ENCODE measurements at regions of chr7 and their contacts with region 1.

Region 1: GRCh38 chr7:73683056-73683964 is at the starts of genes BUD23 and DNAJC30:
- DNase-seq: peak; percentile 99
- H3K4me3 Mint-ChIP-seq: peak within 1 kb of the TSS; percentile 98
- H3K27ac Mint-ChIP-seq: peak within 1 kb of the TSS; percentile 91
- H3K4me1 Mint-ChIP-seq: peaks cover 47% of the 10 kb centered on the region
- H3K27me3 Mint-ChIP-seq: no peaks in the 10 kb centered on the region
- total RNA-seq, gene BUD23: 95.1 to 110 TPM
- total RNA-seq, gene DNAJC30: 4.2 to 4.4 TPM

Region 2: GRCh38 chr7:73433924-73434700 is 249.2 kb before region 1 on chr7:
- CTCF ChIA-PET with region 1: no interaction called
- intact Hi-C with region 1: loop called (anchors 10 kb)
- DNase-seq: no peak
- H3K4me3 Mint-ChIP-seq: peak overlapping the region; percentile 57
- H3K27ac Mint-ChIP-seq: no peak overlapping the region
- H3K4me1 Mint-ChIP-seq: peaks cover 7% of the 10 kb centered on the region
- H3K27me3 Mint-ChIP-seq: peaks cover 9% of the 10 kb centered on the region

Region 3: GRCh38 chr7:73667344-73668102 is 15.8 kb before region 1 on chr7 and contains the start of gene VPS37D:
- CTCF ChIA-PET with region 1: interaction called, 3 read pairs
- intact Hi-C with region 1: loop called (anchors 1 kb)
- DNase-seq: peak; percentile 91
- H3K4me3 Mint-ChIP-seq: peak within 1 kb of the TSS; percentile 63
- H3K27ac Mint-ChIP-seq: no peak within 1 kb of the TSS
- H3K4me1 Mint-ChIP-seq: peaks cover 8% of the 10 kb centered on the region
- H3K27me3 Mint-ChIP-seq: peaks cover 34% of the 10 kb centered on the region
- total RNA-seq, gene VPS37D: not detected

Region 4: GRCh38 chr7:73707142-73707595 is 23.9 kb after region 1 on chr7:
- CTCF ChIA-PET with region 1: no interaction called
- intact Hi-C with region 1: loop called (anchors 2 kb)
- DNase-seq: peak; percentile 28
- H3K4me3 Mint-ChIP-seq: no peak overlapping the region
- H3K27ac Mint-ChIP-seq: no peak overlapping the region
- H3K4me1 Mint-ChIP-seq: peaks cover 22% of the 10 kb centered on the region
- H3K27me3 Mint-ChIP-seq: no peaks in the 10 kb centered on the region